ENCODE measurements at regions of chr15 and their contacts with region 1.

Region 1: DNA sequence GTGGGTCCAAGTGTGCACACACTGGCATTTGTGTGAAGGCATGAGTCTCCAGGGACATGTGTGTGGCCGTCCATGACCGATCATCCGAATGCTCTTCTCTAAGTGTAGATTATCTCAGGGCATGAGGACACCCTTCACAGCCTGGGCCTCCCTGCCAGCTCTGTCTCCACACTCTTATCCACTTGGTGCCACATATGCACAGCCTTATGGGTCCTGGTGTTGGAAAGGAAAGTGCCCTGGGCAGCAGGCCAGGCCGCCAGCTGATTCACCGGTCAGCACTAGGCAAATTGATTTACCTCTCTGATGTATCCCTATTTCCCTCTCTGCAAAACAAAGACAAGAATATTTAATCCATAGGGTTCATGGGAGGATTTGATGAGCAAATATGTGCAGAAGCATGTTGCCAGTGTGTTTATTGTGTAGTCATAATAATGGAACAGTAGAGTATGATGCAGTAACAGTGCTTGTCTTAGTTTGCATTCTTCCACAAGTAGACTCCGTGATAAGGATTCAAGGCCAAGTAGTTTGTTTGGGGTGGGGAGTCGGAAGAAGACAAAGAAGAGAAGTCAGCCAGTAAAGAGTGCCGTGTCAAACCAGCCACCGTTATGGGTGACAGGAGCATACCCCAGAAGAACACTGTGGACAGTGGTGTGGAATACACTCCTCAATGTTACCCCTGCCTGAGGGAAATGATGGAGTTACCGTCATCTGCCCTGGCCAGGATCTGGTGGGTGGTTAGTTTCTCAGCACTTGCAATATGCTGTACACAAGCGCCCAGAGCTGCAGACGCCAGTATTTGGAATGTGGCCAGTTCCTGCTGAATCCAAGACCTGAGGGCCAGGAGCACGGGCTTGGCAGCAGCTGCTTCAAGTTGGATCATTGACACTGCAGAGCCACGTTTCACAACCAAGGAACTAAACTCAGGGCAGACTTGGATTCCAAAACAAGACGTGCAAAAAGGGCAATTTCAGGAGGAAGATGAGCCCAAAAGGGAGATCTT is 85.1 kb downstream of the MTHFS start:
- DNase-seq: no peak
- H3K4me3 ChIP-seq: no peak overlapping the region
- H3K27ac ChIP-seq: no peak overlapping the region
- H3K4me1 ChIP-seq: no peaks in the 10 kb centered on the region
- H3K27me3 ChIP-seq: no peaks in the 10 kb centered on the region
- CTCF ChIP-seq: no peak

Region 2: GRCh38 chr15:79243723-79244122 is 568.0 kb before region 1 on chr15:
- CTCF ChIA-PET with region 1: no interaction called
- POLR2A ChIA-PET with region 1: no interaction called
- intact Hi-C with region 1: no loop called
- DNase-seq: no peak
- H3K4me3 ChIP-seq: no peak overlapping the region
- H3K27ac ChIP-seq: no peak overlapping the region
- H3K4me1 ChIP-seq: no peaks in the 10 kb centered on the region
- H3K27me3 ChIP-seq: peaks cover 8% of the 10 kb centered on the region
- CTCF ChIP-seq: no peak

Region 3: DNA sequence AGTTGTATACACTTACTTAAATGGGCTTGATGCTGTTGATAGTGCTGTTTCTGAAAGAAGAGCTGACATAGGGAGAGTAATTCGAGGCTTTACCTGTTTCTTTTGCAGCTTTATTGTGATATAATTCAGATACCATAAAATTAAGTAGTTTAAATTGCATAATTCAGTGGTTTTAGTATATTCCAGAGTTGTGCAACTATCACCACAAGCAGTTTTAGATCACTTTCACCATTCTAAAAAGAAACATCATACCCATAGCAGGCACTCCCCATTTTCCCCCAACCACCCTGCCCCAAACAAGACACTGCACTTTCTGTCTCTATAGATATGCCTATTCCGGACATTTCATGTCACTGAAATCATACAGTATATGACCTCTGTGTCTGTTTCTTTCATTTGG is 13.4 kb before region 1 on chr15:
- CTCF ChIA-PET with region 1: interaction called, 10 read pairs
- POLR2A ChIA-PET with region 1: no interaction called
- intact Hi-C with region 1: no loop called
- DNase-seq: no peak
- H3K4me3 ChIP-seq: no peak overlapping the region
- H3K27ac ChIP-seq: no peak overlapping the region
- H3K4me1 ChIP-seq: no peaks in the 10 kb centered on the region
- H3K27me3 ChIP-seq: no peaks in the 10 kb centered on the region
- CTCF ChIP-seq: no peak